ENCODE measurements at regions of chr3 and their contacts with region 1.

Region 1: DNA sequence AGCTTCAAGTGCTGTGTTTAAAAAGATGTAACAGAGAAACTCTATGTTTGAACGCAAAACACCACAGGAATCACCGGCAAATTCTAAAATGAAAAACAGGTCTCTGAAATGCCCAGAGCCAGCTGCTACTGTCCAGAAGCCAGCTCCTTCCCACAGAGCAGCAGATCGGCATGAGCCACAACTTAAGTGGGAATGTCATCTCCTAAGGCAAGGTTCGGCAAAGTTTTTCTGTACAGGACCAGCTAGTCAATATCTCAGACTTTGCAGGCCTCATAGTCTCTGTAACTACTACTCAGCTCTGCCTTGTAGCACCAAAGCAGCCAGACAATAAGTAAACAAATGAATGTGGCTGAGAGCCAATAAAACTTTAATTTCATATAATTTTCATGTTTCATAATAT is 4.9 kb downstream of the PLOD2 start:
- DNase-seq: no peak
- H3K4me3 ChIP-seq: no peak overlapping the region
- CTCF ChIP-seq: no peak
- POLR2A ChIP-seq: no peak

Region 2: DNA sequence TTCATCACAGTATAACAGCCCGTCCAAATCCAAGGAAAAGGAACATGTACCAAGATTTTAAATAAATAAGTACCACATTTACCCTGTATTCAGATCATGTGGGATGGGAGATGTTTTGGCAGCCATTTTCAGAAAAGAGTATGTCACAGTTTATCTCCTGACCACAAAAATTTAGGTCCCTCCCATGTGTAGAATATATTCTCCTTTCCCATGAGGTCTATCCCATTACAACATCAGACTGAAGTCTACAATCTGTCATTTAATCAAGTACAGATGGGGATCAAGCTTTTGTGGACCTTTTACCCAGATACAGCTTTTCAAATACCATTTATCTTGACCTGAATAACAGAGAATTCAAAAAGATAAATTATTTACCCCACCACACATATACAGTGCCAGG is 439.6 kb before region 1 on chr3:
- intact Hi-C with region 1: loop called (anchors 5 kb)
- DNase-seq: no peak
- H3K4me3 ChIP-seq: no peak overlapping the region
- CTCF ChIP-seq: no peak
- POLR2A ChIP-seq: no peak

Measured in lower leg skin (tissue), 4 donors.